ENCODE measurements at regions of chr2 and their contacts with region 1.

Region 1: DNA sequence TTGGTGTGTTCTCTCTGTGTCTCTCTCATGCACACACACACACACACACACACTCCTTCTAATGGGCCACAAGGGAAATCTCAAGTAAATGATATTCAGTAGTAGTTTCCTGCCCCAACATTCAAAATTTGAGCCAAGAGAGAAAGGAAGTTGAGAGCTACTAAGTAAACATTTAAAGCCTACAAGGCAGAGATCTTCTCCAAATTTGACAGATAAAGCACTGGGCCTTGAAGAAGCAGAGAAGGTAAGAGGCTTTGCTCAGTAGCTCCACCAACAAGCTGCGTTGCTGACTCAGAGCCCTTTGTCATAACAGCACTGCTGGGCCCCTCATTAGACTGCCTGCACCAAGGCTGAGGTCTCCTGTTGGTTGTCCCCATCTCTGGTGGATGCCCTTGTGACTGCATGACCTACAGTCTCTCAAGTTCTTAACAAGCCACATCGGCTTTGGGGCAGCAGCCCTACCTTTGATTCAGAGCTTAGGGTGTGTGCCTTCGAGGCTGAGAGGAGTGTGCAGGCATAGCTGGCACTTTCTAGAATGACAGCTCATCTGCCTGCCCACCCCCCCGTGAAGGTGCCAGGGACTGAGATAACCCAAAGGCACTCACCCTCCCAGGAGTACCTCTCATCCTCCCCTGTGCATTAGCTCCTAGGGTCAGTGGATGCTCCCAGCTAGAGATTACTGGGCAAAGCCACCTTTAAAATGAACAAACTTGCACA is 32.3 kb upstream of the NEB start:
- DNase-seq: peak; percentile 66
- ATAC-seq: peak; percentile 62
- H3K4me3 ChIP-seq: peak overlapping the region in 2 of 5 experiments; percentile 8 to 40
- H3K4me3 Mint-ChIP-seq: peak overlapping the region; percentile 69
- H3K27ac ChIP-seq: peak overlapping the region; percentile 79 to 89
- H3K27ac Mint-ChIP-seq: peak overlapping the region; percentile 93
- H3K4me1 ChIP-seq: peaks cover 85 to 90% of the 10 kb centered on the region in 2 donors
- H3K4me1 Mint-ChIP-seq: peaks cover 87% of the 10 kb centered on the region
- H3K27me3 ChIP-seq: no peaks in the 10 kb centered on the region
- H3K27me3 Mint-ChIP-seq: no peaks in the 10 kb centered on the region
- CTCF ChIP-seq: no peak

Region 2: GRCh38 chr2:151730262-151730975 is 36.2 kb before region 1 on chr2:
- CTCF ChIA-PET with region 1: interaction called, 11 read pairs
- POLR2A ChIA-PET with region 1: interaction called, 4 read pairs
- intact Hi-C with region 1: loop called (anchors 2 kb)
- DNase-seq: peak; percentile 49
- ATAC-seq: peak; percentile 46
- H3K4me3 ChIP-seq: no peak overlapping the region
- H3K4me3 Mint-ChIP-seq: peak overlapping the region; percentile 42
- H3K27ac ChIP-seq: peak overlapping the region; percentile 30 to 45
- H3K27ac Mint-ChIP-seq: peak overlapping the region; percentile 92
- H3K4me1 ChIP-seq: peaks cover 27 to 28% of the 10 kb centered on the region in 2 donors
- H3K4me1 Mint-ChIP-seq: peaks cover 35% of the 10 kb centered on the region
- H3K27me3 ChIP-seq: no peaks in the 10 kb centered on the region
- H3K27me3 Mint-ChIP-seq: no peaks in the 10 kb centered on the region
- CTCF ChIP-seq: no peak

Region 3: GRCh38 chr2:151786483-151786882 is 19.9 kb after region 1 on chr2:
- CTCF ChIA-PET with region 1: interaction called, 5 read pairs
- POLR2A ChIA-PET with region 1: interaction called, 3 read pairs
- intact Hi-C with region 1: loop called (anchors 2 kb)
- DNase-seq: no peak
- ATAC-seq: no peak
- H3K4me3 ChIP-seq: no peak overlapping the region
- H3K4me3 Mint-ChIP-seq: no peak overlapping the region
- H3K27ac ChIP-seq: peak overlapping the region in 1 of 2 donors; percentile 29
- H3K27ac Mint-ChIP-seq: peak overlapping the region; percentile 17
- H3K4me1 ChIP-seq: peaks cover 4 to 10% of the 10 kb centered on the region in 2 donors
- H3K4me1 Mint-ChIP-seq: peaks cover 27% of the 10 kb centered on the region
- H3K27me3 ChIP-seq: no peaks in the 10 kb centered on the region
- H3K27me3 Mint-ChIP-seq: no peaks in the 10 kb centered on the region
- CTCF ChIP-seq: no peak

Region 4: DNA sequence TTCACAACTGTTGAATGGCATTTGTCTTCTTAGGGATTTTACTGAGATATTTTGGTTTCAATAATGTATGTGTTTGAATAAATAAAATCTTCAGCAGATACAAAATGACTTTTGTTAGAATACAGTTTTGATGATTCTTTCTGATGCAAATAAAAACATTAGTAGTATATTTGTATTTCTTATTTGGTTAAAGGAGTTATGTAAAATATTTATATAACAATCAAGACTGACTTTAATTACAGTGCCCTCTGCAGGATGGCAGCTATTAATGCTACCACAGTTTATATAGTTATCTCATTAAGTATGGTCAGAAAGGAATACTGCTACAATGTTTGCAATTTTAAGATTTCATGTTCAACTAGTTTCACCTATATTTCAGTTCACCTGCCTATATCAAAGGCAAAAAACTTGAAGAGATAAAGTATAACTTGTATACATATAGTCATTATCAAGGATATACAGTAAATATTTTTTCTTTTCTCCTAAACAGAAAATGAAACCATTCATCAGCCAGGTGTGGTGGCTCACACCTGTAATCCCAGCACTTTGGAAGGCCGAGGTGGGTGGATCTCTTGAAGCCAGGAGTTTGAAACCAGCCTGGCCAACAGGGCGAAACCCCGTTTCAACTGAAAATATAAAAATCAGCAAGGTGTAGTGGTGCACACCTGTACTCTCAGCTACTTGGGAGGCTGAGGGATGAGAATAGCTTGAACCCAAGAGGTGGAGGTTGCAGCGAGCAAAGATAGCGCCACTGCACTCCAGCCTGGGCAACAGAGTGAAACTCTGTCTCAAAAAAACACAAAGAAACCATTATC is 41.9 kb after region 1 on chr2:
- CTCF ChIA-PET with region 1: interaction called, 10 read pairs
- POLR2A ChIA-PET with region 1: no interaction called
- intact Hi-C with region 1: loop called (anchors 2 kb)
- DNase-seq: peak; percentile 60
- ATAC-seq: peak; percentile 64
- H3K4me3 ChIP-seq: no peak overlapping the region
- H3K4me3 Mint-ChIP-seq: no peak overlapping the region
- H3K27ac ChIP-seq: peak overlapping the region in 1 of 2 donors; percentile 31
- H3K27ac Mint-ChIP-seq: no peak overlapping the region
- H3K4me1 ChIP-seq: peaks cover 4 to 11% of the 10 kb centered on the region in 2 donors
- H3K4me1 Mint-ChIP-seq: peaks cover 7% of the 10 kb centered on the region
- H3K27me3 ChIP-seq: no peaks in the 10 kb centered on the region
- H3K27me3 Mint-ChIP-seq: no peaks in the 10 kb centered on the region
- CTCF ChIP-seq: peak; percentile 94

Region 5: GRCh38 chr2:151891566-151892194 is 125.1 kb after region 1 on chr2:
- CTCF ChIA-PET with region 1: no interaction called
- POLR2A ChIA-PET with region 1: no interaction called
- intact Hi-C with region 1: no loop called
- DNase-seq: no peak
- ATAC-seq: no peak
- H3K4me3 ChIP-seq: no peak overlapping the region
- H3K4me3 Mint-ChIP-seq: no peak overlapping the region
- H3K27ac ChIP-seq: no peak overlapping the region
- H3K27ac Mint-ChIP-seq: no peak overlapping the region
- H3K4me1 ChIP-seq: no peaks in the 10 kb centered on the region
- H3K4me1 Mint-ChIP-seq: peaks cover 2% of the 10 kb centered on the region
- H3K27me3 ChIP-seq: no peaks in the 10 kb centered on the region
- H3K27me3 Mint-ChIP-seq: no peaks in the 10 kb centered on the region
- CTCF ChIP-seq: no peak

Measured in B cell (primary cell).